Caco-2 (cell line): ENCODE measurements at regions of chr10 and their contacts with region 1.

Region 1: GRCh38 chr10:121598207-121598862 is at the start of gene FGFR2:
- DNase-seq: peak; percentile 88 to 95
- H3K4me3 ChIP-seq: peak within 1 kb of the TSS; percentile 98
- H3K4me3 Mint-ChIP-seq: peak within 1 kb of the TSS; percentile 95
- H3K27ac Mint-ChIP-seq: peak within 1 kb of the TSS; percentile 91
- H3K4me1 ChIP-seq: peaks cover 39% of the 10 kb centered on the region
- H3K4me1 Mint-ChIP-seq: peaks cover 18% of the 10 kb centered on the region
- H3K27me3 ChIP-seq: no peaks in the 10 kb centered on the region
- H3K27me3 Mint-ChIP-seq: no peaks in the 10 kb centered on the region
- CTCF ChIP-seq: no peak
- total RNA-seq, gene FGFR2: 266 and 286 TPM in 2 replicates

Region 2: GRCh38 chr10:121324678-121325213 is 273.6 kb before region 1 on chr10:
- CTCF ChIA-PET with region 1: no interaction called
- POLR2A ChIA-PET with region 1: no interaction called
- intact Hi-C with region 1: loop called (anchors 10 kb)
- DNase-seq: peak; percentile 45 to 58
- H3K4me3 ChIP-seq: no peak overlapping the region
- H3K4me3 Mint-ChIP-seq: no peak overlapping the region
- H3K27ac Mint-ChIP-seq: peak overlapping the region; percentile 91
- H3K4me1 ChIP-seq: peaks cover 27% of the 10 kb centered on the region
- H3K4me1 Mint-ChIP-seq: peaks cover 31% of the 10 kb centered on the region
- H3K27me3 ChIP-seq: no peaks in the 10 kb centered on the region
- H3K27me3 Mint-ChIP-seq: no peaks in the 10 kb centered on the region
- CTCF ChIP-seq: no peak

Region 3: GRCh38 chr10:121368347-121369025 is 229.8 kb before region 1 on chr10:
- CTCF ChIA-PET with region 1: no interaction called
- POLR2A ChIA-PET with region 1: no interaction called
- intact Hi-C with region 1: loop called (anchors 5 kb)
- DNase-seq: peak; percentile 81 to 83
- H3K4me3 ChIP-seq: peak overlapping the region; percentile 7; the same call in 1 of the 2 replicates
- H3K4me3 Mint-ChIP-seq: peak overlapping the region; percentile 71
- H3K27ac Mint-ChIP-seq: peak overlapping the region; percentile 87
- H3K4me1 ChIP-seq: peaks cover 49% of the 10 kb centered on the region
- H3K4me1 Mint-ChIP-seq: peaks cover 43% of the 10 kb centered on the region
- H3K27me3 ChIP-seq: no peaks in the 10 kb centered on the region
- H3K27me3 Mint-ChIP-seq: no peaks in the 10 kb centered on the region
- CTCF ChIP-seq: peak in 1 of 2 experiments; percentile 22

Region 4: DNA sequence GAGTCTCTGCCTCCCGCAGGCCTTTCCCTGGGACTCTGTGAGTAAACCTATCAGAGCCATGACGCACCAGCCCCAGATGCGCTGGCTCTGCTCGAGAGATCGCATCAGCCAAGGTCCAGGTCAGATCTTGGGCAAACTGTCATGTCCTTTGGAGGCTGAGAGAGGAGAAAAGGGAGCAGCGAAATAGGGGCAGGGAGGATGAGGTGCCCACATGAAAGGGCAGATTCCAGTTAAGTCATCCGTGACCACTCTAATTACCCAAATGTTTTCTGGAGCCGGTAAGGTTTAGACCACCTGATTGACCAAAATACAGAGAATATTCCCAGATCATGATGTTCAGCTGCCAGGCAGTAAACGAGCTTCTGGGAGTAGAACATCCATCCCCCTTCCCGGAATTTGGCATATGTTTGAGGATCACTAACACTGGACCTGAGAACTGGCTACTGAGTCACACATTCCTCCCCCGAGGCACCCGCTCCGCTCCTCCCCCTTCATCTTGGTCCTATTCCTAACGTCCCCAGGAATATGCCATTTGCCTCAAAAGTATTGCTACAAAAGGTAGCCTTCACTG is 88.0 kb before region 1 on chr10:
- CTCF ChIA-PET with region 1: no interaction called
- POLR2A ChIA-PET with region 1: no interaction called
- intact Hi-C with region 1: loop called (anchors 5 kb)
- DNase-seq: no peak
- H3K4me3 ChIP-seq: no peak overlapping the region
- H3K4me3 Mint-ChIP-seq: peak overlapping the region; percentile 24
- H3K27ac Mint-ChIP-seq: peak overlapping the region; percentile 52
- H3K4me1 ChIP-seq: peaks cover 69% of the 10 kb centered on the region
- H3K4me1 Mint-ChIP-seq: peaks cover 51% of the 10 kb centered on the region
- H3K27me3 ChIP-seq: no peaks in the 10 kb centered on the region
- H3K27me3 Mint-ChIP-seq: no peaks in the 10 kb centered on the region
- CTCF ChIP-seq: no peak

Region 5: DNA sequence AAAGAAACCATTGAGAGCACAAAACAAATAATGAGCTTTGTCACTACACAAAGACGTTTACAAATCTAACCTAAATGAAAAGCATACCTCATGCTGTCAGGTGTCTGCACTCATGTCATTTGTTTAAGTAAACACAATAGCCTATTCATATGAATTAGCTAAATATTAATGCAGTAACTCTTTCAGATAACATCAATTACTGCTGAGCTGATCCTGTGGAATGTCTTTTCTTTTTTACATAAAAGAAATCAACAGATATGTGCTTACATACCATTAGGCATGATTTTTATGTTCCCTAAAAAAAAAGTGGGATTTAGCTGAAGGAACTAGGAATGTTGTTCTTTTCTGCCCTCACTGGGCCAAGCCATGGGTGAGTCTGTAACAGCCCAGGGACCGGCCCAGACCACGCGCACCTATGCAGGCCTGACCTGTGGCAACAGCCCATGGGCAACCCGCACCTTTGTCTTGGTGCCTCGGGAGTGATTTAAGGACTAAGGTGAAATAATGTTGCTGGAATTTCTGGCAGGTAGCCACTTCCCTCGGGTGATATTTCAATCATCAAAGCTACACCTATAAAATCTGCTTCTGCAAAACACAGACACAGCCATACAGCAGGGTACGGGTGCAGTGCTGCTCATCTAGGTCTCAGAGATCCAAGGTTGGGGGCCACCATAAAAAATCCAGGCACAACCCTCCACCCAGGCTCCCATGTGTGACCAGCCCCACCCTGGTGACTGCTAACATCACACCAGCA is 44.6 kb before region 1 on chr10:
- CTCF ChIA-PET with region 1: no interaction called
- POLR2A ChIA-PET with region 1: no interaction called
- intact Hi-C with region 1: loop called (anchors 1 kb)
- DNase-seq: peak; percentile 56 to 63
- H3K4me3 ChIP-seq: no peak overlapping the region
- H3K4me3 Mint-ChIP-seq: no peak overlapping the region
- H3K27ac Mint-ChIP-seq: peak overlapping the region; percentile 68
- H3K4me1 ChIP-seq: peaks cover 53% of the 10 kb centered on the region
- H3K4me1 Mint-ChIP-seq: peaks cover 55% of the 10 kb centered on the region
- H3K27me3 ChIP-seq: no peaks in the 10 kb centered on the region
- H3K27me3 Mint-ChIP-seq: no peaks in the 10 kb centered on the region
- CTCF ChIP-seq: no peak

Region 6: DNA sequence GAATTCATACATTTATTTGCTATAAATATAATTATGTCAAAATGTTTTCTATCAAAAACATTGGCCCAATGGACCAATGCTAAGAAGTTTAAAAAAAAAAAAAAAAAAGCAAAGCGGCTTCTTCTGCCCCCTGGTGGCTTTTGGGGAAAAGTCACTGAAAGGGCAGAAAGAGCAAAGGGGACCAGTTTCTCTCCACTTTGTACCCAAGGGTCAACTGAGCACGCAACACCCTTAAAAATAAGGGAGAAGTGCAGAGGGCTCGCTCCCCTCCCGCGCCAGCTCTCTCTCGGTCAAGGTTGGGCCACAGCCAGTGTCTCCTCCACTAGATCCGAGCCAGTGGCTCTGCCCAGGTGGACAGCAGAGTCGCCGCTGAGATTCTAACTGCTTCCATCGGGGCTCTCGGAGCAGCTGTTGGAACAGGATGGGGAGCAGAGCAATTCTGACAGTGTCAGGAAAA is 136.3 kb after region 1 on chr10:
- CTCF ChIA-PET with region 1: interaction called, 8 read pairs
- POLR2A ChIA-PET with region 1: no interaction called
- intact Hi-C with region 1: loop called (anchors 2 kb)
- DNase-seq: peak in 1 of 2 experiments; percentile 57
- H3K4me3 ChIP-seq: peak overlapping the region; percentile 34
- H3K4me3 Mint-ChIP-seq: peak overlapping the region; percentile 76
- H3K27ac Mint-ChIP-seq: peak overlapping the region; percentile 52
- H3K4me1 ChIP-seq: peaks cover 3% of the 10 kb centered on the region; the same call in 1 of the 2 replicates
- H3K4me1 Mint-ChIP-seq: peaks cover 36% of the 10 kb centered on the region
- H3K27me3 ChIP-seq: no peaks in the 10 kb centered on the region
- H3K27me3 Mint-ChIP-seq: no peaks in the 10 kb centered on the region
- CTCF ChIP-seq: peak; percentile 68 to 82

Region 7: GRCh38 chr10:121886997-121887622 is 288.8 kb after region 1 on chr10:
- CTCF ChIA-PET with region 1: no interaction called
- POLR2A ChIA-PET with region 1: no interaction called
- intact Hi-C with region 1: loop called (anchors 10 kb)
- DNase-seq: peak; percentile 64 to 80
- H3K4me3 ChIP-seq: no peak overlapping the region
- H3K4me3 Mint-ChIP-seq: no peak overlapping the region
- H3K27ac Mint-ChIP-seq: no peak overlapping the region
- H3K4me1 ChIP-seq: peaks cover 8% of the 10 kb centered on the region
- H3K4me1 Mint-ChIP-seq: peaks cover 15% of the 10 kb centered on the region
- H3K27me3 ChIP-seq: no peaks in the 10 kb centered on the region
- H3K27me3 Mint-ChIP-seq: no peaks in the 10 kb centered on the region
- CTCF ChIP-seq: peak; percentile 88 to 93

Region 8: DNA sequence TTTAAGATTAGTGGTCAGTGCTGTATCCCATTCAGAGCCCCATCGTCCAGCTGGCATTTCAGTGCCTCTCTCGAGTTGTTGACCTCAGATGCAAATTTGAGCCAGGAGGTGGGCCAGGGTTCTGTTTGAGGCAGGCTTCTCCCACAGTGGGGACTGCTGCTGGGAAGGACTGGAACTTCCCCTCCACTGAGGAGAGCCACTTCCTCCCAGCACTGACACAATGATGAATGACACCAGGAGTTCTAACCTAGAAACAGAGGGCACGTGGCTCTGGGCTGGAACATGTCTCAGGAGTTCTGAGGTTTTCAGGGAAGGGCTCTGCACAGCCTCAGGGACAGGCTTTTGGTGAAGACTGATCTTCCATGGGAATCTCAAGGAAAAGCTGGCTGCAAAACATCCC is 654.5 kb after region 1 on chr10:
- CTCF ChIA-PET with region 1: no interaction called
- POLR2A ChIA-PET with region 1: no interaction called
- intact Hi-C with region 1: no loop called
- DNase-seq: no peak
- H3K4me3 ChIP-seq: no peak overlapping the region
- H3K4me3 Mint-ChIP-seq: no peak overlapping the region
- H3K27ac Mint-ChIP-seq: no peak overlapping the region
- H3K4me1 ChIP-seq: no peaks in the 10 kb centered on the region
- H3K4me1 Mint-ChIP-seq: no peaks in the 10 kb centered on the region
- H3K27me3 ChIP-seq: no peaks in the 10 kb centered on the region
- H3K27me3 Mint-ChIP-seq: no peaks in the 10 kb centered on the region
- CTCF ChIP-seq: no peak